Ascending aorta (tissue), 2 donors: ENCODE measurements at regions of chr3 and their contacts with region 1.

Region 1: GRCh38 chr3:49786241-49786958 is at the start of gene IP6K1:
- DNase-seq: peak; percentile 100
- H3K4me3 ChIP-seq: peak within 1 kb of the TSS; percentile 82 to 96
- H3K27ac ChIP-seq: peak within 1 kb of the TSS; percentile 91 to 92
- H3K4me1 ChIP-seq: peaks cover 10 to 20% of the 10 kb centered on the region in 2 donors
- H3K27me3 ChIP-seq: no peaks in the 10 kb centered on the region
- CTCF ChIP-seq: no peak
- total RNA-seq, gene IP6K1: 33.8 TPM

Region 2: GRCh38 chr3:49120438-49121131 is 665.8 kb before region 1 on chr3 and contains the start of gene USP19:
- intact Hi-C with region 1: loop called (anchors 5 kb)
- DNase-seq: peak; percentile 81 to 98
- H3K4me3 ChIP-seq: peak within 1 kb of the TSS; percentile 92
- H3K27ac ChIP-seq: peak within 1 kb of the TSS; percentile 92 to 96
- H3K4me1 ChIP-seq: peaks cover 15 to 19% of the 10 kb centered on the region in 2 donors
- H3K27me3 ChIP-seq: no peaks in the 10 kb centered on the region
- CTCF ChIP-seq: no peak
- total RNA-seq, gene USP19: 37.8 TPM

Region 3: GRCh38 chr3:49539659-49540560 is 246.5 kb before region 1 on chr3:
- intact Hi-C with region 1: loop called (anchors 5 kb)
- DNase-seq: peak; percentile 67 to 95
- H3K4me3 ChIP-seq: peak overlapping the region; percentile 37 to 66
- H3K27ac ChIP-seq: peak overlapping the region; percentile 67 to 87
- H3K4me1 ChIP-seq: no peaks in the 10 kb centered on the region
- H3K27me3 ChIP-seq: no peaks in the 10 kb centered on the region
- CTCF ChIP-seq: peak; percentile 88 to 94 (median 94)

Region 4: GRCh38 chr3:49723628-49724551 is 62.5 kb before region 1 on chr3 and contains the start of gene GMPPB:
- intact Hi-C with region 1: loop called (anchors 1 kb)
- DNase-seq: peak; percentile 92 to 97
- H3K4me3 ChIP-seq: peak within 1 kb of the TSS; percentile 86 to 98
- H3K27ac ChIP-seq: peak within 1 kb of the TSS; percentile 93 to 97
- H3K4me1 ChIP-seq: peaks cover 16 to 20% of the 10 kb centered on the region in 2 donors
- H3K27me3 ChIP-seq: no peaks in the 10 kb centered on the region
- CTCF ChIP-seq: no peak
- total RNA-seq, gene GMPPB: 16.4 TPM

Region 5: DNA sequence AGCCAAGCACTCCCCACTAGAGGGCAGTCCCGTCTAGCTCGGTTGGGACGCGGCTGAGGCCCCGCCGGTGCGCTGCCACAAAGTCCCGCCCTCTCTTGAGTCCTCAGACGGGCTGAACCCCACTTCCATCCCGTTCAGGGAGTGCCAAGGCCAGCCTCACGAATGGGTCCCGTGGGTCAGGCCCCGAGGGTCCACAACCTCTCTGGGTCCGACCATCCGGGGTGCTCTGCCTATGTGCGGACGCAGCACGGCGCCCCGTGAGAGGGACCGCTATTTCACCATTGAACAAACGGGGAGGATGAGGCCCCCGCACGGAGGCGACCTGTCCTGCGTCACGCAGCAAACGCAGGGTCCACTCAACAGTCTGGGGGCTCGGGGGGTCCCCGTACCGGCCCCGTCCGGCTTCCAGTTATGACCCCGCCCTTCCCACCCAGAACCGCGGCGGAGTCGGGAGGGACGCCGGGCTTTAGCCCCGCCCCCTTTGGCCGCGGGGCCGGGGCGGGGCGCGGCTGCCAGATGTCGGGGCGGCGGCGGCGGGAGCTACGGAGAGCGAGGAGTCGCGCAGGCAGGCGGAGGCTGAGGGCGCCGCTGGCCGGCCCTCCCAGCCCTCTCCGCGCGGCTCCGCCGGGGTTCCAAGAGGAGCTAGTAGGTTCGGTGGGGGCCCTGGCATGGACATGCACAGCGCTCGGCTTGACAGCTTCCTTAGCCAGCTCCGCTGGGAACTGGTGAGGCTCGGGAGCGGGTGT is 16.5 kb after region 1 on chr3 and contains the start of gene INKA1:
- intact Hi-C with region 1: loop called (anchors 1 kb)
- DNase-seq: peak; percentile 49 to 93
- H3K4me3 ChIP-seq: peak within 1 kb of the TSS; percentile 84 to 86
- H3K27ac ChIP-seq: peak within 1 kb of the TSS; percentile 98
- H3K4me1 ChIP-seq: peaks cover 22 to 40% of the 10 kb centered on the region in 2 donors
- H3K27me3 ChIP-seq: no peaks in the 10 kb centered on the region
- CTCF ChIP-seq: peak; percentile 88 to 96 (median 89)
- total RNA-seq, gene INKA1: not detected